Activated CD4-positive, alpha-beta memory T cell treated with anti-CD3 and anti-CD28 coated beads, Interleukin-2, amount 10 ng/mL, durations not matched to agents 7 days and 5 days (primary cell): ENCODE measurements at regions of chr22 and their contacts with region 1.

Region 1: GRCh38 chr22:24803011-24803542 is 2.9 kb upstream of the SGSM1 start:
- DNase-seq: peak; percentile 58
- H3K4me3 Mint-ChIP-seq: no peak overlapping the region
- H3K27ac Mint-ChIP-seq: no peak overlapping the region
- H3K4me1 Mint-ChIP-seq: peaks cover 37% of the 10 kb centered on the region
- H3K27me3 Mint-ChIP-seq: peaks cover 7% of the 10 kb centered on the region

Region 2: GRCh38 chr22:24789516-24789915 is 13.6 kb before region 1 on chr22:
- CTCF ChIA-PET with region 1: interaction called, 11 read pairs
- POLR2A ChIA-PET with region 1: no interaction called
- DNase-seq: no peak
- H3K4me3 Mint-ChIP-seq: no peak overlapping the region
- H3K27ac Mint-ChIP-seq: no peak overlapping the region
- H3K4me1 Mint-ChIP-seq: no peaks in the 10 kb centered on the region
- H3K27me3 Mint-ChIP-seq: peaks cover 5% of the 10 kb centered on the region

Region 3: DNA sequence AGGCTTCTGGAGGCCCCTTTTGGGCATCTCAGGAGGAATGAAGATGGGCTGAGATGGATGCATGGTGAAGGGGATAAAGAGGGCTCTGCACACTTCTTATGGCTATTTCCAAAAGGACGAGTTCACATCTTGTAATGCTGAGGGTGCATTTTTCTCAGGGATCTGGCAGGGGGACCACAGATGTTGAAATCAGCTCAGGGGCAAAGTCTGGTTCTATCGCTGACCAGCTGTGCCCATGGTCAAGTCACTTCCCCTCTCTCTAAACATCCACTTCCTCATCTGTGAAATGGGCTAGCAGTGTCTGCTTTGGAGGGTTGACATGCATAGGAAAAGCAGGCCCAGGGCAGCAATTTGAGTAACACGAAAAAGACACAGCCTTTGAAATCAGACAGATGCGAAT is 117.0 kb after region 1 on chr22:
- CTCF ChIA-PET with region 1: no interaction called
- POLR2A ChIA-PET with region 1: no interaction called
- DNase-seq: no peak
- H3K4me3 Mint-ChIP-seq: no peak overlapping the region
- H3K27ac Mint-ChIP-seq: no peak overlapping the region
- H3K4me1 Mint-ChIP-seq: no peaks in the 10 kb centered on the region
- H3K27me3 Mint-ChIP-seq: no peaks in the 10 kb centered on the region